GM10248 (cell line): ENCODE measurements at regions of chr11 and their contacts with region 1.

Region 1: GRCh38 chr11:29343465-29344333 is 673.1 kb downstream of the KCNA4 start:
- DNase-seq: peak; percentile 39
- CTCF ChIP-seq: peak; percentile 86

Region 2: GRCh38 chr11:29321293-29322132 is 22.2 kb before region 1 on chr11:
- CTCF ChIA-PET with region 1: interaction called, 10 read pairs
- POLR2A ChIA-PET with region 1: no interaction called
- DNase-seq: no peak
- CTCF ChIP-seq: no peak

Region 3: GRCh38 chr11:29328961-29329441 is 14.7 kb before region 1 on chr11:
- CTCF ChIA-PET with region 1: interaction called, 25 read pairs
- POLR2A ChIA-PET with region 1: no interaction called
- DNase-seq: peak; percentile 8
- CTCF ChIP-seq: peak; percentile 68

Region 4: GRCh38 chr11:30917859-30918478 is 1574.3 kb after region 1 on chr11:
- CTCF ChIA-PET with region 1: interaction called, 11 read pairs
- POLR2A ChIA-PET with region 1: no interaction called
- DNase-seq: peak; percentile 22
- CTCF ChIP-seq: peak; percentile 49